ENCODE measurements at regions of chr1 and their contacts with region 1.

Region 1: DNA sequence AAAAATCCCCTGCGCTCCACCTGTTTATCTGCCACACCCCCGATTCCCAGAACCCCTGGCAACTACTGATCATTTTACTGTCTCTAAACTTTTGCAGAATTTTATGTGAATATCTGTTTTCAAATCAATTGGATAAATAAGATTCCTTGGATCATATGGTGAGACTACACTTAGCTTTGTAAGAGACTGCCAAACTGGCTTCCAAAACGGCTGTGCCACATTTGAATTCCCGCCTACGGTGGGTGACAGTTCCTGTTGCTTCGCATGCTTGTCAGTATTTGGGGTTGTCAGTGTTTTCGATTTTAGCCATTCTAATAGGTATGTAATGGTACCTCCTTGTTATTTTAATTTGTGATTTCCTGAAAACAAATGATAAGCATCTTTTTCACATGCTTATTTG is 22.7 kb upstream of the FMN2 start:
- DNase-seq: no peak
- ATAC-seq: no peak
- H3K4me3 ChIP-seq: no peak overlapping the region
- H3K4me3 Mint-ChIP-seq: no peak overlapping the region
- H3K27ac ChIP-seq: no peak overlapping the region
- H3K27ac Mint-ChIP-seq: no peak overlapping the region
- H3K4me1 ChIP-seq: no peaks in the 10 kb centered on the region
- H3K4me1 Mint-ChIP-seq: no peaks in the 10 kb centered on the region
- H3K27me3 ChIP-seq: no peaks in the 10 kb centered on the region
- H3K27me3 Mint-ChIP-seq: peaks cover 0 to 10% (median 2%) of the 10 kb centered on the region in 5 donors

Region 2: DNA sequence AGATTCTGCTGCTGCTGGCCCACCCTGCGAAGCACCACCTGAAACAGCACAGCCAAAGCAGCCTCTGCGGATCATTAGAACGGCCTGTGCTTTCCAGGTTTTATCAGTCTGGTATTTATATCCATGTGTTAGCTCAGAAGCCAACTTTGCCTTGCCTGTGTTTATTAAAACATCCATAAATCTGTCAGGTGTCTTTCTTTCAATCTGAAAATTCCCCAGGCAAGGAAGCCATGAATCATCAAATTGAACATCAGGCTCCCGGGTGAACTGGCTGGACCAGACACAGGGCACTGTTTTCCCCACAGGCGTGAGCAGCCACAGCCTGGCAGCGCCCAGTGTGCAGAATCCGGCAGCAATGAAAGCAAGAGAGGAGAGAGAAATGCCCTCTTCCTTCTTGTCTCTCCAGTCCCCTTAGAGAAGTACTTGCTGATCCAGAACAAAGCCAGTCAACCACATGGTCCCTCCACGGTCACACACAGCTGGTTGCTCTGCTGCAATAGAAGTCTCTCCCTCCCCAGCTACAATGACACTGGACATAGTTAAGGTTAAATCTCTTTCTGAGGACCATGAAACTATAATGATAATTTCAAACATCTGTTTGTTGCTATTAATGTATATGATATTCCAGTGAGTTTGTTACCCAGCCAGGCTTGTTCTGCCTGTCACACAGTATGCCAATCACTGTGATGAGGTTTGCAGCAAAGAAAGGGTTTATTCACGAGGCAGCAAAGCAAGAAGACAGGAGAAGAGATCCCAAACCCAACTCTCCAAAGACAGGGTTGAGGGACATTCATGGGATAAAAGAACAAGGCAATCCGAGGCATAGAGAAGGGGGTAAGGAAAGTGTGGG is 189.4 kb before region 1 on chr1:
- CTCF ChIA-PET with region 1: no interaction called
- POLR2A ChIA-PET with region 1: no interaction called
- intact Hi-C with region 1: no loop called
- DNase-seq: no peak
- ATAC-seq: no peak
- H3K4me3 ChIP-seq: no peak overlapping the region
- H3K4me3 Mint-ChIP-seq: no peak overlapping the region
- H3K27ac ChIP-seq: no peak overlapping the region
- H3K27ac Mint-ChIP-seq: no peak overlapping the region
- H3K4me1 ChIP-seq: no peaks in the 10 kb centered on the region
- H3K4me1 Mint-ChIP-seq: no peaks in the 10 kb centered on the region
- H3K27me3 ChIP-seq: no peaks in the 10 kb centered on the region
- H3K27me3 Mint-ChIP-seq: no peaks in the 10 kb centered on the region

Region 3: GRCh38 chr1:240100371-240100934 is 31.5 kb after region 1 on chr1:
- CTCF ChIA-PET with region 1: no interaction called
- POLR2A ChIA-PET with region 1: no interaction called
- intact Hi-C with region 1: loop called in 1 of 2 experiments (anchors 1 kb)
- DNase-seq: no peak
- ATAC-seq: no peak
- H3K4me3 ChIP-seq: no peak overlapping the region
- H3K4me3 Mint-ChIP-seq: no peak overlapping the region
- H3K27ac ChIP-seq: no peak overlapping the region
- H3K27ac Mint-ChIP-seq: no peak overlapping the region
- H3K4me1 ChIP-seq: no peaks in the 10 kb centered on the region
- H3K4me1 Mint-ChIP-seq: no peaks in the 10 kb centered on the region
- H3K27me3 ChIP-seq: no peaks in the 10 kb centered on the region
- H3K27me3 Mint-ChIP-seq: peaks cover 5 to 30% (median 25%) of the 10 kb centered on the region in 5 donors